OCI-LY7 (cell line): ENCODE measurements at regions of chr17 and their contacts with region 1.

Region 1: DNA sequence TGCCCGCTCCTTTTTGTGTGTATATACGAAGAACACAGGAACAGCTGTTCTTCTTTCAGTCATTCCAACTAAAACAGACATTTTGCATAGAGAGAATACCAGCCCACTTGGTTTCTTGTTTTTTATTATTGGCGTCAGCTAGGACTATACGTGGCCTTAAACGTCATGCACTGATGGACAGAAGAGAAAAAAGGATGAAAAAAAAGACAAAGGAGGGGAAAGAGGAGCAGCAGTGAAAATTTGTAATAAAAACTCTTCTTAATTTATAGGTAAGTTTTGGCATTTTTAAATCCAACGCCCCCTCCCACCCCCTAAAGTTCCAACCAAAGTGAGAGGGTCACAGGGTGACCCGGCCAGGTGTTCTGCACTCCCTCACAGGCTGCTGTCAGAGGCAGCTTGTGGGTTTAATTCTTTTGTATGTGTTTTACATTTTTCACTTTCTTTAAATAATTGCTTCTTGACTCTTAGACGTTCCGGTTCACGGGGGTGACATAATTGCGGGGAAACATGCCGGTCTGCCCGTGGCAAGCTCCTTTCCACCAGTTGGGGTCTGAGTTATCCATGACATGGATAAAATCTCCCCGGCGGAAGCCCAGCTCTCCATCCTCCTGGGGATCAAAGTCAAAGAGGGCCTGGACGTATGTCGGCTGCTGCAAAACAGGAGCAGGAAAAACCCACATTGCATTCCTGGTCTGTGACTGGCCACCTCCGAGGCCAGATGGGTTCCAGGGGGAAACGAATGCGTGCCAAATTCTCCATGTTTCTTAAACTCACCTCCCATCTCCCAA is 30.9 kb upstream of the SLC25A19 start:
- DNase-seq: peak; percentile 94
- H3K4me3 ChIP-seq: peak overlapping the region; percentile 51
- H3K27ac ChIP-seq: peak overlapping the region; percentile 92
- H3K4me1 ChIP-seq: peaks cover 89% of the 10 kb centered on the region
- CTCF ChIP-seq: 0 out of 2 replicates have a peak, but pooled peaks have one; percentile 38

Region 2: GRCh38 chr17:75031972-75032900 is 287.9 kb before region 1 on chr17:
- CTCF ChIA-PET with region 1: no interaction called
- POLR2A ChIA-PET with region 1: no interaction called
- intact Hi-C with region 1: no loop called
- DNase-seq: no peak
- H3K4me3 ChIP-seq: no peak overlapping the region
- H3K27ac ChIP-seq: no peak overlapping the region
- H3K4me1 ChIP-seq: peaks cover 13% of the 10 kb centered on the region
- CTCF ChIP-seq: no peak

Region 3: DNA sequence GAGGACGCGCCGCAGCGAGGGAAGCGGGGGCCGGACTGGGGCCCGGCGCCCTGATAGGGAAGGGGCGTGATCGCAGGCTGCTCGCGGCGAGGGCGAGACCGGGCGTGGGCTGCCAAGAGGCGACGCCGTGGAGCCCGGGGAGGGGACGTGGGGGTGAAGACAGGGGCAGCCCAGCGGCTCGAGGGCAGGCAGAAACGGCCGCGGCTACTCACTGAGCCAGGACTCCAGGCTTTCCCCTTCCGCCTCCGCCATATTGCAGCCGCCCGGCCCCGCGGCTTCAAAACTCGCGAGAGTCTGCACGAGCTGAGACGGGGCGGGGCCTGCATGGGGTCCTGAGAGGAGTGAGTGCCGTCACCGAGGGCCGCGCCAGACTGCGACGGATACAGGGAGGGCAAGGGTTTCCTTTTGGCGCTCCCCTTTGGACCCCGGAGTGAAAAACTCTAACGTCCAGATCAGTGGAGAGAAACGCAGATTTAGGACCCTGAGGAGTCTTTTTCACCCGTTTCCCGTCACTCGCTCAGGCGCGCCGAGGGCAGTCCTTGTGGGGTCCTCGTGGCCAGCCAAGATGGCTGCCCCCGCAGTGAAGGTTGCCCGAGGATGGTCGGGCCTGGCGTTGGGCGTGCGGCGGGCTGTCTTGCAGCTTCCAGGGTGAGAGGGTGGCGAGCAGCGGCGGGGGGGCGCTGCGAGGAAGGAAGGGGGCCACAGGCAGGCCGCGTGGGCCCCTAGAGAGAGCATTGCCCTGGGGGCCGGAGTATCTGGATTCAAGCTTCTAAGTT is 58.6 kb before region 1 on chr17 and contains the starts of genes GGA3 and MRPS7:
- CTCF ChIA-PET with region 1: no interaction called
- POLR2A ChIA-PET with region 1: no interaction called
- intact Hi-C with region 1: no loop called
- DNase-seq: peak; percentile 99
- H3K4me3 ChIP-seq: peak within 1 kb of the TSS; percentile 79
- H3K27ac ChIP-seq: peak within 1 kb of the TSS; percentile 68
- H3K4me1 ChIP-seq: peaks cover 26% of the 10 kb centered on the region
- CTCF ChIP-seq: no peak; the same call in none of the 2 replicates
- total RNA-seq, gene GGA3: 52.3 and 77.6 TPM in 2 replicates
- total RNA-seq, gene MRPS7: 123 and 127 TPM in 2 replicates

Region 4: DNA sequence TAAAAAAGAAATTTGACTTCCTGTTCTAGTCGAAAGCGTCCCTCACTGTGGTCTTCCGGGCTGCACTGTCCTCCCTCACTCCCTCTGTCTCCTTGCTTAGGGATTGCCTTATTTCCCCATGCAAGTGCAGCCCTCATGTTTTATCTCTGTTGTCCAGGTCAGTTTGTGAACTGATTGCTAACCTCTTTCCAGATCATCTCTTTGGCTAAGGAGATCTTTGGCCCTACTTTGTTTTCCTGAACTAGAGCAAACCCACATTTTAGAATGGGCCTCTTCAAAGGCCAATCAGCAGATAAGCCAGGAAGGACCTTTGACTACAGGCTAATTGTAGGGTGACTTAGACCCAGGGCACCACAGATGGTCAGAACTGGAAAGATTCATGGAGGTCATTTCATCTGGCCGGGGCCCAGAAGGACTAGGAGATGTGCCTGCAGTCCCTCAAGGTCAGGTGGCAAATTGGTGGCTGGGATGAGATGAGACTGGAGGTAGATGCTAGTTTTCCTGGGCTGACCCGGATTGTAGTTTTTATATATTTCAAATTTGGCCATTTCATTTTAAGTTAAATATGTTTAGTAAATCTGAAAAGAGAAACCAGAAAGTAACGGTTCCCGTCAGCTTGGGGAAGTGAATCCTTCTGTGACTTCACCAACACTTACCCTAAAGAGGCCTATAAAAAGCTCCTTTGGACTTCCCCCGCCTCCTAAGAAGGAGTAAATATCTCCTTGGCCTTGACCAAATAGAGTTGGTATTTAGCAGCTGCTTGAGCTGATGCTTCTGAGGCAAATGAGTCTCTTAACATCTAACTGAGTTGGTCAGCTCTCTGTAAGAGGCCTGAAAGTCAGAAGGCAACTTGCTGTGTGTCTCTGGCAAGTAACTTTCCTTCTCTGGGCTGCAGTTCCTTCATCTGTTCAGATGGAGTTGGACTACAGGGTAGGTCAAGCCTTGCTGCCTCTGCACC is 24.6 kb before region 1 on chr17:
- CTCF ChIA-PET with region 1: interaction called, 4 read pairs
- POLR2A ChIA-PET with region 1: interaction called, 108 read pairs
- intact Hi-C with region 1: loop called (anchors 1 kb)
- DNase-seq: peak; percentile 94
- H3K4me3 ChIP-seq: peak overlapping the region; percentile 62
- H3K27ac ChIP-seq: peak overlapping the region; percentile 95
- H3K4me1 ChIP-seq: peaks cover 90% of the 10 kb centered on the region
- CTCF ChIP-seq: no peak

Region 5: GRCh38 chr17:75338335-75338734 is 18.2 kb after region 1 on chr17:
- CTCF ChIA-PET with region 1: interaction called, 9 read pairs
- POLR2A ChIA-PET with region 1: interaction called, 393 read pairs
- intact Hi-C with region 1: loop called (anchors 1 kb)
- DNase-seq: no peak
- H3K4me3 ChIP-seq: peak overlapping the region; percentile 36
- H3K27ac ChIP-seq: peak overlapping the region; percentile 94
- H3K4me1 ChIP-seq: peaks cover 89% of the 10 kb centered on the region
- CTCF ChIP-seq: no peak

Region 6: DNA sequence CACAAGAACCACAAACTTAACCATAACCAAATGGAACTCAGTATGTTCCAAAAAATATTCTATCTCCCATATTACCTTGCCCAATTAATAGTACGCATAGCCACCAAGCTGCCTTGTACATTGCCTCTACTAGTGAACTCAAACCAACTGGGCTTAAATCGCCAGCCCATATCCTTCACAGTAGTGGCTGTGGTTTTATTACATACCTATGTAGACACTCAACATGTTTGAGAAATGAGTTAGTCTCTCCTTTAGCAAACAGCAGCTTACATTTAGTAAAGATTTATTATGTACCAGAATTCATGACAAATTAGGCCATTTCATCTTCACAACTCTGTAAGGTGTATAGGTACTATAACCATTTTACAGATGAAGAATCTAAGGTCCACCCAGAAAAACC is 44.0 kb after region 1 on chr17:
- CTCF ChIA-PET with region 1: interaction called, 3 read pairs
- POLR2A ChIA-PET with region 1: interaction called, 9 read pairs
- intact Hi-C with region 1: loop called (anchors 1 kb)
- DNase-seq: no peak
- H3K4me3 ChIP-seq: peak overlapping the region; percentile 44
- H3K27ac ChIP-seq: peak overlapping the region; percentile 64
- H3K4me1 ChIP-seq: peaks cover 97% of the 10 kb centered on the region
- CTCF ChIP-seq: no peak

Region 7: GRCh38 chr17:75400326-75400939 is 80.3 kb after region 1 on chr17:
- CTCF ChIA-PET with region 1: interaction called, 4 read pairs
- POLR2A ChIA-PET with region 1: interaction called, 10 read pairs
- intact Hi-C with region 1: loop called (anchors 1 kb)
- DNase-seq: no peak
- H3K4me3 ChIP-seq: no peak overlapping the region
- H3K27ac ChIP-seq: no peak overlapping the region
- H3K4me1 ChIP-seq: peaks cover 48% of the 10 kb centered on the region
- CTCF ChIP-seq: no peak

Region 8: GRCh38 chr17:75412455-75413317 is 92.6 kb after region 1 on chr17:
- CTCF ChIA-PET with region 1: interaction called, 5 read pairs
- POLR2A ChIA-PET with region 1: interaction called, 9 read pairs
- intact Hi-C with region 1: loop called (anchors 1 kb)
- DNase-seq: peak; percentile 95
- H3K4me3 ChIP-seq: peak overlapping the region; percentile 50
- H3K27ac ChIP-seq: peak overlapping the region; percentile 60
- H3K4me1 ChIP-seq: peaks cover 54% of the 10 kb centered on the region
- CTCF ChIP-seq: peak; percentile 97

Region 9: DNA sequence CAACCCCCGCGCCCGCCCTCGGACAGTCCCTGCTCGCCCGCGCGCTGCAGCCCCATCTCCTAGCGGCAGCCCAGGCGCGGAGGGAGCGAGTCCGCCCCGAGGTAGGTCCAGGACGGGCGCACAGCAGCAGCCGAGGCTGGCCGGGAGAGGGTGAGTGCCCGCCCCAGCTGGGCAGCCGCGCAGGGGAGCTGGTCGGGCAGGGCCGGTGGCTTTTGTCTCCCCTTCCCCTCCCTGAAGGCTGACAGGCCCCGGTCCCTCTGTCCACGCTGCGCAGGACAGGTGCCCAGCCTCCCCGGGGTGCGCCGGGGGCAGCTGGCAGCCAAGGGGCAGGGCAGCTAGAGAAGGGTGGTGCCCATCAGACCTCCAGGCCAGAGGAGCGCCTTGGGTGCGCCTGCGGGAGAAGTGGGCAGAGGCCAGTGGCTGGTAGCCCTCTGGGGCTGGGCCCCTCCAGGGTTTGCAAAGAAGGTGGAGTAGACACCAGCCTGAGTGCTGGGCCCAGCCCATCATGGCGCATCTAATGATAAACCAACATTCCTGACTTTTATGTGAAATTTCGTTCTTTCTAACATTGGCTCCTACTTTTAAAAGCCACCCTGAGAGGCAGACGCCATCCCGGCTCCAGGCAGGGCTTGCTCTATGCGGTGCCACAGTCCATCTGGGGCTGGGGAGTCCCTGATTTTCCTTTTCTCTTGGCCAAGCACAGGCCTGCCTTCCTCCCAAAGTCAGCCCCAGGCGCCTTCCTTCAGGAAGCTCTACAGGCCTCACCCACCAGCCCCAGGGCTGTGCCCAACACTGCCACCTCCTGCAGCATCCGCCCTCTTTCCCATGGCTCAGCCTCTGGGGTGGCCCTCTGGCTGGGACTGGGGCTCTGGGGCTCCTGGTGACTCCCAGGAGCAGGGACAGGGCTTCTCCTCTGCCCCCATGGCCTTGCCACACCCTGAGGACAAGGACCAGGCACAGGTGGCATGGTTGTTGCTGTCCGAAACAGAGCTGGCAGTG is 401.7 kb after region 1 on chr17:
- CTCF ChIA-PET with region 1: no interaction called
- POLR2A ChIA-PET with region 1: no interaction called
- intact Hi-C with region 1: no loop called
- DNase-seq: no peak
- H3K4me3 ChIP-seq: peak overlapping the region; percentile 8
- H3K27ac ChIP-seq: no peak overlapping the region
- H3K4me1 ChIP-seq: peaks cover 7% of the 10 kb centered on the region
- CTCF ChIP-seq: no peak